ENCODE measurements at regions of chr14 and their contacts with region 1.

Region 1: GRCh38 chr14:102917469-102918211 is 4.8 kb upstream of the AMN start:
- DNase-seq: peak; percentile 49 to 63
- ATAC-seq: peak in 5 of 8 donors; percentile 35 to 63 (median 46)
- H3K4me3 ChIP-seq: no peak overlapping the region
- H3K27ac ChIP-seq: no peak overlapping the region
- H3K4me1 ChIP-seq: peaks cover 0 to 3% (median under 1%) of the 10 kb centered on the region in 9 donors
- H3K27me3 ChIP-seq: peaks cover 0 to 17% (median 9%) of the 10 kb centered on the region in 7 donors
- CTCF ChIP-seq: peak; percentile 24 to 74 (median 67)

Region 2: GRCh38 chr14:102774391-102775153 is 143.1 kb before region 1 on chr14:
- intact Hi-C with region 1: loop called in 6 of 10 experiments (anchors 5 to 10 kb)
- DNase-seq: peak in 1 of 2 donors; percentile 39
- ATAC-seq: peak in 6 of 8 donors; percentile 50 to 78 (median 70)
- H3K4me3 ChIP-seq: no peak overlapping the region
- H3K27ac ChIP-seq: no peak overlapping the region
- H3K4me1 ChIP-seq: peaks cover 0 to 34% (median 12%) of the 10 kb centered on the region in 9 donors
- H3K27me3 ChIP-seq: peaks cover 0 to 8% (median 0%) of the 10 kb centered on the region in 7 donors
- CTCF ChIP-seq: peak; percentile 26 to 75 (median 64)

Measured in heart right ventricle (tissue), 16 donors.